ENCODE measurements at regions of chr10 and their contacts with region 1.

Region 1: DNA sequence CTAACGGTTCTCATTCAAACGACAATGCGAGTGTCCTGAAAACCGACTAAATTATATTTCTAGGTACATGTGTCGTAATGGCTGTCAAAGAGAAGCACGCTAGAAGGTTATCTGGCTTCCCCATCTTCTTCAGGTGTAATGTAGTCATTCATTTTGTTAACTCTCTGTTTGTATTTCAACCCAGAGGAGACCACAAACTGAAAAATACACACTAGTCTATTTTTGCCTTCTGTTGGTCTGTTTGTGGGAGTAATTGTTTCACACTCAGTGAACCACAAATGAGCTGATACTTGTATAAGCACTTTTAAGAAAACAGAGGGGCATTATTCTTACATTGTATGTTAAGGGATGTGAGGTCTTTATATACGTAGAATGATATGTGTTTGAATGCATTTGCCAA is 305.9 kb downstream of the GATA3 start:
- DNase-seq: no peak
- H3K4me3 Mint-ChIP-seq: no peak overlapping the region
- H3K27ac Mint-ChIP-seq: no peak overlapping the region
- H3K4me1 Mint-ChIP-seq: peaks cover 15% of the 10 kb centered on the region
- H3K27me3 Mint-ChIP-seq: peaks cover 2% of the 10 kb centered on the region

Region 2: DNA sequence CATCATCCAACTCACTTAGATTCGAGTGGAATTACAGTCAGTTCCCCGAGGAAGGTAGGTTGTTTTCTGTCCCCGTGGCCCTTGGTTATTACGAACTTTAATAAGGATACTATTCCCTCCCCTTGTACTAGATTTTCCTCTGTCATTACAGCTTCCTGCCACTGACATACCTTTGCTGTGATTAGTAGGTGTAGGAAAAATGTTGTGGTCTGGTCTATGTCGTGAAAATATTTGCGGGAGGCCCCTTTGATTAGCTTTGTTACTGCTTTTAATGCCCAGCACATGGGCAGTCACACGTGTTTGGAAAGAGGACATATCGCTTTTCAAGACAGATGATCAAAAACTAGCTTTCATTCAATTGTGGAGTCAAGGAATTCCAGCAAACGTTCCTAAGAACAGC is 213.7 kb before region 1 on chr10:
- CTCF ChIA-PET with region 1: no interaction called
- intact Hi-C with region 1: no loop called
- DNase-seq: no peak
- H3K4me3 Mint-ChIP-seq: no peak overlapping the region
- H3K27ac Mint-ChIP-seq: no peak overlapping the region
- H3K4me1 Mint-ChIP-seq: no peaks in the 10 kb centered on the region
- H3K27me3 Mint-ChIP-seq: no peaks in the 10 kb centered on the region

Region 3: DNA sequence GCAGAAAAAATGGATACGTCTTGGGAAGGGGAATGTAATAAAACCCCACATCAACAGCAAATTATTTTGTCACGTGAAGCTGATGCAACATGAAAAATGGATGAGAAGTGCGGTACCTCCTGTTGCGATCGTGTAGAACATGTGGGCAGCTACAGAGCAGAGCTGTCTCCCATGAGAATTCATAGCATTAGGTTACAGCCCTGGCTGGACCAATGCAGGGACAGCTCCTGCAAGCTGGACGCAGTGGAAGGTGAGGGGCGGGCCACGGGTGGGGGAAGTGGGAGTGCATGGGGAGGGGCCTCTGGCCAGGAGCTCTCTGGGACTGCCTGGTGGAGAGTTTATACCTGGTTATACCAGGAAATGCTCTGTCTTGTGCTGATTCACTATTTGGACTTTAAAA is 185.6 kb before region 1 on chr10:
- CTCF ChIA-PET with region 1: no interaction called
- intact Hi-C with region 1: no loop called
- DNase-seq: no peak
- H3K4me3 Mint-ChIP-seq: no peak overlapping the region
- H3K27ac Mint-ChIP-seq: no peak overlapping the region
- H3K4me1 Mint-ChIP-seq: no peaks in the 10 kb centered on the region
- H3K27me3 Mint-ChIP-seq: no peaks in the 10 kb centered on the region

Region 4: GRCh38 chr10:8331883-8332729 is 28.3 kb before region 1 on chr10:
- CTCF ChIA-PET with region 1: no interaction called
- intact Hi-C with region 1: loop called (anchors 2 kb)
- DNase-seq: peak; percentile 80
- H3K4me3 Mint-ChIP-seq: peak overlapping the region; percentile 75
- H3K27ac Mint-ChIP-seq: no peak overlapping the region
- H3K4me1 Mint-ChIP-seq: peaks cover 20% of the 10 kb centered on the region
- H3K27me3 Mint-ChIP-seq: peaks cover 13% of the 10 kb centered on the region

Region 5: DNA sequence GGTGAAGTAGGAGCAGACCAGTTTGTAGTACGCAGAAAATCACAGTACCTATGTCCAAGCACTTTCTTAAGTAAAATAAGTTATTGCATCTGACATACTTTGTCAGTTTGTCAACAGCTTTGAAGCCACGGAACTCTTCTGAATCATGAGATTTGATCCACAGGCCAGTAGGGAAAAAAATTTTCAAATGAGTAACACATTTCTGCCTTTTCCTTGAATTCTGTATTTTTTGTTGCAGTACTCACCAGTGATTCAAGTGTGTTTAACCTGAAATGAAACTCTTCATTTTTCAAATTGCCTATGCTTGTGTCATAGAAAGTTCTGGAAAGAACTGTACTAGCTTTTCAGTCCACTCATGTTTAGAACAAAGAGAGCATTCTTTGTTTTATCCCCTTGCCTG is 31.9 kb after region 1 on chr10:
- CTCF ChIA-PET with region 1: no interaction called
- intact Hi-C with region 1: no loop called
- DNase-seq: no peak
- H3K4me3 Mint-ChIP-seq: no peak overlapping the region
- H3K27ac Mint-ChIP-seq: no peak overlapping the region
- H3K4me1 Mint-ChIP-seq: peaks cover 7% of the 10 kb centered on the region
- H3K27me3 Mint-ChIP-seq: peaks cover 2% of the 10 kb centered on the region